Activated CD8-positive, alpha-beta T cell treated with anti-CD3 and anti-CD28 coated beads for 36 hours (primary cell): ENCODE measurements at regions of chr6 and their contacts with region 1.

Region 1: DNA sequence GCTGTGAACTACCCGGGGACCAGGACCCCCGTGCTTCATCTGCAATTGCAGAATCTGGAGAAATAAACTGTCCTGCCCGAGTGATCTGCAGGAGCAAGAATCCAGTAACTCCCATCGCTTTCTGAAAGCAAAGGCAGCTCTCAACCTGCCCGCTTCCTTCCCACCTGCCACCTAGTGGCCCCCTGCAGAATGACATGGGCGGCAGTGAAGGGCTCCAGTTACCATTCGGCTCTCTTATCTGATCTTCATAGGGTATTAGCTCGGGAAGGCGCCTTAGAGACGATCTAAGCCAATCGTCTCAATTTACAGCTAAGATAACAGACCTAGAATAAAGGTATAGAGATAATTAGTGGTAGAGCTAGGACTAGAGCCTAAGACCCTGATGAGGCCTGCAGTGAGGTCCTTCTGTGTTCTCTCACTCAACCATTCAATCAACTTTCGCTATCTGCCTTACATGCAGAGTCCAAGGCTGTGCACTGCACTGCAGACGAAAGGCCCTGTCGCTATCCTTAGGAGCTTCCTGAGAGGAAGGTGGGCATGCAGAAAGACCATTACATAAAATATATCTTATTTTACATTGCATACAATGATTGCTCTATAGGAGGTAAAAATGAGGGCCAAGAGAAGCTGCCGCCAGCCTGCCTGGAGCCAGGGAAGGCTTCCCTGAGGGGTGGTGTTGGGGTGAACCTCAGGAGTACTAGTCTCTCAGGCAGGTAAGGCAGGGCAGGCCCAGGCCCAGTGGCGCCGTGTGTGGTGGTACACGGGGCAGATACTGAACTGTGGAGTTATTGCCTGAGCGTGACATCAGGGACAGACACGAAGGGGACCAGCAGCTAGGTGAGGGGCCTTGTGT is 7.1 kb upstream of the PSMG4 start:
- DNase-seq: peak; percentile 82
- ATAC-seq: peak; percentile 97
- H3K4me3 Mint-ChIP-seq: no peak overlapping the region
- H3K27ac Mint-ChIP-seq: no peak overlapping the region
- H3K4me1 Mint-ChIP-seq: peaks cover 2% of the 10 kb centered on the region
- H3K27me3 Mint-ChIP-seq: peaks cover 30% of the 10 kb centered on the region
- CTCF ChIP-seq: peak; percentile 99

Region 2: DNA sequence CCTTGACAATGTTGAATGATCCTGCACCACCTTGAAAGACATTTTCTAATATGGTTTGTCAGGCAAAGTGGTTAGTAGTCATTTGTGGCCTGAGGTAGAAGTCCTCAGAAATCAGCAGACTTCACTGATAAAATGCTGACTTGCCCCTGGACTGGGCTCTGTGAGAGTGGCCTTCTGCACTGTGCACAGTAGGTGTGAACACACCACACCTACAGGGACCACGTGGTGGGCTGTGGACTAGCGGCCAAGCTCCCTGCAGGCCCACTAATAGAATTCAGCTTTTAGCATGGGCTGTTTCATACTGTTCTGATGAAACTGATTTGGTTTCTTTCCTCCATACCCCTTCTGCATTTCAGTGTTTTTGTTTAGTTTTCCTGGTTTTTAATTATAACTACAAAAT is 125.9 kb before region 1 on chr6:
- CTCF ChIA-PET with region 1: interaction called, 92 read pairs
- POLR2A ChIA-PET with region 1: no interaction called
- intact Hi-C with region 1: loop called (anchors 2 kb)
- DNase-seq: no peak
- ATAC-seq: no peak
- H3K4me3 Mint-ChIP-seq: no peak overlapping the region
- H3K27ac Mint-ChIP-seq: no peak overlapping the region
- H3K4me1 Mint-ChIP-seq: peaks cover 5% of the 10 kb centered on the region
- H3K27me3 Mint-ChIP-seq: no peaks in the 10 kb centered on the region
- CTCF ChIP-seq: no peak

Region 3: DNA sequence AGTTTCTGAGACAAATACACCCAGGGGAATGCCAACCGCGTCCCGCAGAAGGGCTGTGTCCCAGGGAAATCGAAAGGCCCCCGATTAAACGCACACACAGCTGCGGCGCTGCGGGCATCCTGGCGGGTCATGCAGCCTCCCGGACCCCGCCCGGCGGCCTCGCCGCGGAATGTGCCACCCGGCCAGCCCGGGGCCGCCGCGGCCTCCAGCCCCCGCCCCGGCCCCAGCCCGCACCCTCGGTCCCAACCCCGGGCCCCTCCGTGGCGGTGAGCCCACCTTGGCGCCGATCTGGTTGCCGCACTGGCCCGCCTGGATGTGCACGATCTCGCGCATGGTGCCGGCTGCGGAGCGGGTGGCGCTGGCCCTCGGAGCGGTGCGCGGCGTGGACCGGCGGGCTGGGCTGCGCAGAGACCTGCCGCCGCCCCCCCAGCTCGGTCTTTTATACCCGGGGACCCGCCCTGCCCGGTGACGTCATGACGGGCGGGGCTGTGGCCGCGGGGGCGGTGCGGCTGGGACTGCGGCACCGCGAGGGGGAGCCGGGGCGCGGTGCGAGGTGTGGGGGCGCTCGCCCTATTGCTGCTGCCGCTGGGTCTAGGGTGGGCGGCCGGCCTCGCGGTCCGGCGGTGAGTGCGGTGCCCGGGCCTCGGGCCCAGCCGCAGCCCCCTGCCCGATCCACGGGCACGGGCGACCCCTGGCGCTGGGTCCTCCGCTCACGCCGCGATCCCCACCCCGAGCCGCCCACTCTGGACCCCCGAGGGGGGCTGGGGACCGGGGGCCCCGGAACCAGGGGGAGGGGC is 94.4 kb before region 1 on chr6 and contains the start of gene TUBB2A:
- CTCF ChIA-PET with region 1: interaction called, 10 read pairs
- POLR2A ChIA-PET with region 1: no interaction called
- intact Hi-C with region 1: no loop called
- DNase-seq: peak; percentile 82
- ATAC-seq: peak; percentile 76
- H3K4me3 Mint-ChIP-seq: peak within 1 kb of the TSS; percentile 79
- H3K27ac Mint-ChIP-seq: peak within 1 kb of the TSS; percentile 77
- H3K4me1 Mint-ChIP-seq: peaks cover 21% of the 10 kb centered on the region
- H3K27me3 Mint-ChIP-seq: peaks cover 12% of the 10 kb centered on the region
- CTCF ChIP-seq: peak; percentile 60
- total RNA-seq, gene TUBB2A: 1.3 to 1.5 TPM

Region 4: DNA sequence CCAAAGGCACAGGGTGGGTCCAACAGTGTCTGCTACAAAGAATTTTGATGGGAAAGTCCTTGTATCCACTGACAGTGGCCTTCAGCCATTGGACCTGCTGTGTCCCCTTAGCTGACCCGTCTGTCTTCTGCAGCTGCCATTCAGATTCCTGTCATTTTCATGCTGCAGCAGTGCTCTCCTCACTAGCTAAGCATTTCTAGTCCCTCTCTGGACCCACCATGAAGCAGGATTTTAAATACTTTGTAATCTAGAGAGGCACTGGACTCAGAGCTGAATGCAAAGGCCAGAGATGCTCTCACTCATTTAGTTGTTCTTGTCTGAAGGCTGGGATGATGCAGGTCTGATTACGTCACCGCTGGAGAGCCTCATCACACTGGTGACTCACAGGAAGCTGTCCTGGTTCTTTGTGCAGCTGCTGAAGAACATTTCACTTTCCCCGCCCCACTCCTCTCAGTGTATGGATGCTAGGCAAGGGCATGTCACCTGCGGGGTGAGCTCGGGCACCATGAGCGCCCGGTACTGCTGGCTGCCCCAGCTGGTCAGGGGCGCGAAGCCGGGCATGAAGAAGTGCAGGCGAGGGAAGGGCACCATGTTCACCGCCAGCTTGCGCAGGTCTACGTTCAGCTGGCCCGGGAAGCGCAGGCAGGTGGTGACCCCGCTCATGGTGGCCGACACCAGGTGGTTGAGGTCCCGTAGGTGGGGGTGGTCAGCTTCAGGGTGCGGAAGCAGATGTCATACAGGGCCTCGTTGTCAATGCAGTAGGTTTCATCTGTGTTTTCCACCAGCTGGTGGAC is 74.9 kb before region 1 on chr6:
- CTCF ChIA-PET with region 1: interaction called, 10 read pairs
- POLR2A ChIA-PET with region 1: no interaction called
- intact Hi-C with region 1: no loop called
- DNase-seq: peak; percentile 76
- ATAC-seq: peak; percentile 94
- H3K4me3 Mint-ChIP-seq: no peak overlapping the region
- H3K27ac Mint-ChIP-seq: no peak overlapping the region
- H3K4me1 Mint-ChIP-seq: peaks cover 4% of the 10 kb centered on the region
- H3K27me3 Mint-ChIP-seq: peaks cover 3% of the 10 kb centered on the region
- CTCF ChIP-seq: no peak

Region 5: GRCh38 chr6:3231247-3232016 is 20.3 kb before region 1 on chr6:
- CTCF ChIA-PET with region 1: interaction called, 15 read pairs
- POLR2A ChIA-PET with region 1: interaction called, 5 read pairs
- intact Hi-C with region 1: no loop called
- DNase-seq: no peak
- ATAC-seq: no peak
- H3K4me3 Mint-ChIP-seq: peak overlapping the region; percentile 22
- H3K27ac Mint-ChIP-seq: no peak overlapping the region
- H3K4me1 Mint-ChIP-seq: peaks cover 42% of the 10 kb centered on the region
- H3K27me3 Mint-ChIP-seq: peaks cover 77% of the 10 kb centered on the region
- CTCF ChIP-seq: no peak

Region 6: GRCh38 chr6:3372007-3372846 is 120.5 kb after region 1 on chr6:
- CTCF ChIA-PET with region 1: no interaction called
- POLR2A ChIA-PET with region 1: no interaction called
- intact Hi-C with region 1: no loop called
- DNase-seq: no peak
- ATAC-seq: no peak
- H3K4me3 Mint-ChIP-seq: no peak overlapping the region
- H3K27ac Mint-ChIP-seq: no peak overlapping the region
- H3K4me1 Mint-ChIP-seq: peaks cover 14% of the 10 kb centered on the region
- H3K27me3 Mint-ChIP-seq: peaks cover 2% of the 10 kb centered on the region
- CTCF ChIP-seq: no peak